ENCODE measurements at regions of chr1 and their contacts with region 1.

Region 1: GRCh38 chr1:153749408-153750005 is 21.7 kb downstream of the INTS3 start:
- DNase-seq: peak; percentile 70
- ATAC-seq: peak; percentile 99
- H3K4me3 ChIP-seq: no peak overlapping the region
- H3K27ac ChIP-seq: no peak overlapping the region
- H3K4me1 ChIP-seq: no peaks in the 10 kb centered on the region
- H3K27me3 ChIP-seq: no peaks in the 10 kb centered on the region
- CTCF ChIP-seq: peak; percentile 97
- EP300 ChIP-seq: no peak
- POLR2A ChIP-seq: no peak
- RAD21 ChIP-seq: peak; percentile 94

Region 2: GRCh38 chr1:153510984-153511410 is 238.5 kb before region 1 on chr1:
- CTCF ChIA-PET with region 1: interaction called, 5 read pairs
- POLR2A ChIA-PET with region 1: no interaction called
- in situ Hi-C with region 1: loop called (anchors 10 kb)
- intact Hi-C with region 1: loop called (anchors 10 kb)
- DNase-seq: peak; percentile 71
- ATAC-seq: peak; percentile 85
- H3K4me3 ChIP-seq: no peak overlapping the region
- H3K27ac ChIP-seq: no peak overlapping the region
- H3K4me1 ChIP-seq: peaks cover 35% of the 10 kb centered on the region
- H3K27me3 ChIP-seq: no peaks in the 10 kb centered on the region; a peak in 3 of 5 replicates
- CTCF ChIP-seq: peak; percentile 97
- EP300 ChIP-seq: no peak
- POLR2A ChIP-seq: no peak
- RAD21 ChIP-seq: peak; percentile 95

Region 3: GRCh38 chr1:153677718-153678505 is 71.6 kb before region 1 on chr1:
- CTCF ChIA-PET with region 1: interaction called, 38 read pairs
- POLR2A ChIA-PET with region 1: no interaction called
- in situ Hi-C with region 1: loop called (anchors 5 kb)
- intact Hi-C with region 1: loop called (anchors 1 kb)
- DNase-seq: no peak
- ATAC-seq: peak; percentile 58
- H3K4me3 ChIP-seq: peak overlapping the region in 2 of 3 experiments; percentile 57 to 72; a peak in 4 of 6 replicates
- H3K27ac ChIP-seq: no peak overlapping the region
- H3K4me1 ChIP-seq: peaks cover 25% of the 10 kb centered on the region
- H3K27me3 ChIP-seq: peaks cover 20 to 51% of the 10 kb centered on the region in 2 experiments
- CTCF ChIP-seq: peak; percentile 92
- EP300 ChIP-seq: no peak
- POLR2A ChIP-seq: no peak
- RAD21 ChIP-seq: peak; percentile 88